CD4-positive, alpha-beta memory T cell (primary cell): ENCODE measurements at regions of chr2 and their contacts with region 1.

Region 1: DNA sequence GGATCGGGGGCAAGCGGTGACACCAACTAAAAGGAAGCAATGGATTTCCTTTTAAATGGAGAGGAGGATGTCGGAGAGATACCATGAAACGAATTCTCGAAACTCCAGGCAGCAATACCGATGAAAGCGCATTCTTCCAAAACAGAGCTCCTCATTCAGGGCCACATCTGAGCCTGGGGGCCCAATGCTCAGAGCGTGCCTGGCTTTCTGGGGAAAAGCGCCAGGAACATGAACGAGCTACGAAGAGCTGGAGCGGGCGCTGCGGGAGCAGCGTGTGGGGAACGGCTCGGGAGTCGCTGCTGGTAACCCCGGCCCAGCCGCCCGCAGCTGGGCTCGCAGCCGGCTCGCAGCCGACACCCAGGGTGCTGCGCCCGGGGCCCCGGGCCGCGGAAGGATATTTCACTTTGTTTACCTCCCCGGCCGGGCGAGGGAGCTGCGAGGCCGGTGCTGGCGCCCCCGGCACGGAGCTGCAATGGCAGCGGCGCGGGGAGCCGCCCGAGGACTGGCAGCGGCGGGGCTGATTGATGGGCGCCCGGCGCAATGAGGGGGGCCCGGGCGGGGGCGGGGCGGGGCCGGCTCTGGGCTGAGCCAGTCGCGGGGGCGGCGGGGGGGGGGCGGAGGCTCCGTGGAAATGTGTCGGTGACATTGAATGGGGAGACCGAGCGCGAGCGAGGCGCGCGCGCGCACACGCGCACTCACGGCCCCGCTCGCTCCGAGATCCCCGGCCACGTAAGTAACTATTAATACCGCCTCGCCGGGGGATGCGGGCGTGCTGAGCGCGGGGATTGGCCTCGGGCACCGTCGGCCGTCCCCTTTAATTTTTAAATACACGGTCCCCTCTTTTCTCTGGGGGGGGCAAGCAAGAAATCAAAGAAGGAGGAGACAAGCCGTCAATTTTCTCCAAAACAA is at the start of gene TRIB2:
- DNase-seq: peak; percentile 87 to 92 (median 89)
- H3K4me3 ChIP-seq: peak within 1 kb of the TSS; percentile 78 to 96
- H3K4me3 Mint-ChIP-seq: peak within 1 kb of the TSS; percentile 98 to 100 (median 99)
- H3K27ac ChIP-seq: peak within 1 kb of the TSS; percentile 84
- H3K27ac Mint-ChIP-seq: peak within 1 kb of the TSS; percentile 93 to 99 (median 96)
- H3K4me1 ChIP-seq: peaks cover 39% of the 10 kb centered on the region
- H3K4me1 Mint-ChIP-seq: peaks cover 28 to 83% (median 43%) of the 10 kb centered on the region in 4 donors
- H3K27me3 ChIP-seq: no peaks in the 10 kb centered on the region
- H3K27me3 Mint-ChIP-seq: peaks cover 0 to 2% of the 10 kb centered on the region in 2 donors
- total RNA-seq, gene TRIB2: 123 to 126 TPM

Region 2: DNA sequence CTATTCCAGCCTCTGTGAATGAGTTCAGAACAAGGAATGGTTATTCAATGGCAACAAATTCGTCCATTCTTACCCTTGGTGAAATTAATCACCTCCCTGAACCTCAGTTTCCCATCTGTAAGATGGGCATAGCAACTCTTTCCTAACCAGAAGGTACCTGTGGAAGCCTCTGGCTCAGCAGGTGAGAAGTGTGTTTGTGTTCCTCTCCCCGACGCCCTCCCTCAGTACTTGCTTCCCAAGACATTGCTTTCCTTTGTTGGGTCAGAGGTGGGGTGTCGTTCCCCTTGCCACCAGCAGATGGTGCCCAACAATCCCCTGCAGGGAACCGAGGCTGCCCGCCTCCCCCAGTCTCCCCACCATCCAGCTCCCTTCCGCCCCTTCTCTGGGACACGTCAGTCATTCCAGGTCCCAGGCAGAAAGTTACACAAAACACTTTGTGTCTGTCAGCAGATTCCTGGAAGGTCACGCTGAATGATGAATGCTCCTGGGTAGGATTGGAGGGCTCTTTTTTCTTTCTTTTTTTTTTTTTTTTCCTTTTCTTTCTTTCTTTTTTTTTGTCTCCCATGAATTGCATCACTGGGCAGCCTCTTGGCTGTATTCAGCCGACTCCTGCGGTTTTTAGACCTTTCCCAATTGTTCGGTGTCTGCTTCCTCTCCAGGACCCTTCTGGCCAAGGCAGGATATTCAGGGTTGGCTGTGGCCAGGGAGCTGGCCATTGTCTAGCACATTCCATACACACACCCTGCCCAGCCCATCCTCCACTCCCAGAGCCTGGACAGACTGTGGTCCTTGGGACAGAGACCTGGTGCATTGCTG is 852.8 kb before region 1 on chr2:
- CTCF ChIA-PET with region 1: interaction called, 24 read pairs
- POLR2A ChIA-PET with region 1: interaction called, 11 read pairs
- intact Hi-C with region 1: loop called (anchors 1 kb)
- DNase-seq: peak; percentile 59 to 67 (median 63)
- H3K4me3 ChIP-seq: peak overlapping the region in 1 of 2 donors; percentile 18
- H3K4me3 Mint-ChIP-seq: peak overlapping the region; percentile 54 to 87 (median 72)
- H3K27ac ChIP-seq: peak overlapping the region; percentile 3
- H3K27ac Mint-ChIP-seq: peak overlapping the region in 3 of 7 donors; percentile 26 to 50 (median 31)
- H3K4me1 ChIP-seq: peaks cover 25% of the 10 kb centered on the region
- H3K4me1 Mint-ChIP-seq: peaks cover 19 to 38% (median 23%) of the 10 kb centered on the region in 4 donors
- H3K27me3 ChIP-seq: no peaks in the 10 kb centered on the region
- H3K27me3 Mint-ChIP-seq: no peaks in the 10 kb centered on the region

Region 3: DNA sequence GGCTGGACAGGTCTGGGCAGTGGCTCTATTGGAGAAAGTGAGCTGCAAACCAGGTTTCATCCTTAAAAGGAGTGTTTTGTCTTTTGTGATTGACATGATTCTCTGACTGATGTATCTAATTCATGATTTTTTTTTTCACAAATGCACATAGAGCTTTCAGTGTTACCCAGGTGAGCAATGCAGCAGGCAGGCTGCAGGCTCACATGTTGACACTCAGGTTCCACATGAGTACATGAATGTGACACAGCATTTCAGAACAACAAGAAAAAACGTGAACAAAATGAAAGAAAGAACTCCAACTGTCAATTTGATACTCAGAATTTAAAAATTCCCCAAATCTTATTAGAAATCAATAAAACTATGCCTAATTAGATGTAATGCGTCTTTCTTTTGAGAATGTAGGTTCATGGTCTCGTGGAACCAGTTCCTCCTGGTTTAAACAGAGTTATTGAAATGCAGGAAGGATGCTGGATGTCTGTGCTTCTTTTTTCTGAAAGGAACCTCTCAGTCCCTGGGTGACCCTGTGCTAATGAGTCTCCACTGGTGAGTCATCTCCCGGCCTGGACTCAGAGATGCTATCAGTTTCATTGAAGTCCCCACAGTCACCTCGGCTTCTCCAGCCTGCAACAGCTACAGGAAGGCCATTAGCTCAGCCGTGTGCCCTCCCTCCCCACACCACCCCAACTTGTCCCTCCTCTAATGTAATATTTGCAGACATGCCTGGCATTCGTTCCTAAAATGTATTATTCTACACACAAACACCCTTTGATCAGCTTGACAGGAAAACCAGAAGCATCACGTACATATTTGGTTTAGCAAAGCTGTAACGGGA is 539.7 kb before region 1 on chr2:
- CTCF ChIA-PET with region 1: no interaction called
- POLR2A ChIA-PET with region 1: interaction called, 8 read pairs
- intact Hi-C with region 1: loop called (anchors 5 kb)
- DNase-seq: peak in 2 of 5 donors; percentile 7 to 21
- H3K4me3 ChIP-seq: peak overlapping the region in 1 of 2 donors; percentile 7
- H3K4me3 Mint-ChIP-seq: peak overlapping the region; percentile 16 to 79 (median 60)
- H3K27ac ChIP-seq: no peak overlapping the region
- H3K27ac Mint-ChIP-seq: peak overlapping the region in 6 of 7 donors; percentile 3 to 93 (median 76)
- H3K4me1 ChIP-seq: peaks cover 32% of the 10 kb centered on the region
- H3K4me1 Mint-ChIP-seq: peaks cover 24 to 47% (median 33%) of the 10 kb centered on the region in 4 donors
- H3K27me3 ChIP-seq: no peaks in the 10 kb centered on the region
- H3K27me3 Mint-ChIP-seq: no peaks in the 10 kb centered on the region

Region 4: DNA sequence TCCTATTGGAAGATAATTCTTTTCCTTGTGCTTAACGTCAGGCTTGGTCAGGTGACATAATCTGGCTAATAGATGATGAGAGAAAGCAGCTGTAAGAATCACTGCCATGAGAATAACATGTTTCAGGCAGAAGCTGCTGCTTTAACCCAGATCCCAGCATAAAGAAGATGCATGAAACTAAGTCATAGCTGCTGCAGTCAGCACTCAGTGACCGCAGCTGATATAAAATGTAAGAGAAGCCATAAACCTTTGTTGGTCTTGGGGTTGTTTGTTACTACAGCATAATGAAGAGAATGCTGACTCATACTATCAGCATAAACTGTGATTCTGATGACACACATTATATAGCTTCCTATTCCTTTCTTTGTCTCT is 274.1 kb before region 1 on chr2:
- CTCF ChIA-PET with region 1: interaction called, 64 read pairs
- POLR2A ChIA-PET with region 1: interaction called, 16 read pairs
- intact Hi-C with region 1: no loop called
- DNase-seq: peak in 1 of 5 donors; percentile 12
- H3K4me3 ChIP-seq: no peak overlapping the region
- H3K4me3 Mint-ChIP-seq: peak overlapping the region in 4 of 8 donors; percentile 7 to 56 (median 32)
- H3K27ac ChIP-seq: no peak overlapping the region
- H3K27ac Mint-ChIP-seq: peak overlapping the region in 3 of 7 donors; percentile 71 to 77 (median 74)
- H3K4me1 ChIP-seq: peaks cover 27% of the 10 kb centered on the region
- H3K4me1 Mint-ChIP-seq: peaks cover 19 to 37% (median 24%) of the 10 kb centered on the region in 4 donors
- H3K27me3 ChIP-seq: no peaks in the 10 kb centered on the region
- H3K27me3 Mint-ChIP-seq: no peaks in the 10 kb centered on the region

Region 5: GRCh38 chr2:12514631-12515433 is 201.7 kb before region 1 on chr2:
- CTCF ChIA-PET with region 1: interaction called, 22 read pairs
- POLR2A ChIA-PET with region 1: interaction called, 33 read pairs
- intact Hi-C with region 1: no loop called
- DNase-seq: peak; percentile 58 to 68 (median 60)
- H3K4me3 ChIP-seq: peak overlapping the region in 1 of 2 donors; percentile 34
- H3K4me3 Mint-ChIP-seq: peak overlapping the region; percentile 2 to 75 (median 69)
- H3K27ac ChIP-seq: peak overlapping the region; percentile 37
- H3K27ac Mint-ChIP-seq: peak overlapping the region; percentile 60 to 90 (median 81)
- H3K4me1 ChIP-seq: peaks cover 65% of the 10 kb centered on the region
- H3K4me1 Mint-ChIP-seq: peaks cover 58 to 79% (median 68%) of the 10 kb centered on the region in 4 donors
- H3K27me3 ChIP-seq: no peaks in the 10 kb centered on the region
- H3K27me3 Mint-ChIP-seq: no peaks in the 10 kb centered on the region

Region 6: GRCh38 chr2:12728221-12728777 is 11.8 kb after region 1 on chr2:
- CTCF ChIA-PET with region 1: interaction called, 56 read pairs
- POLR2A ChIA-PET with region 1: interaction called, 105 read pairs
- intact Hi-C with region 1: loop called (anchors 1 kb)
- DNase-seq: peak; percentile 76 to 86 (median 83)
- H3K4me3 ChIP-seq: peak overlapping the region; percentile 29 to 34
- H3K4me3 Mint-ChIP-seq: peak overlapping the region; percentile 65 to 86 (median 78)
- H3K27ac ChIP-seq: peak overlapping the region; percentile 47
- H3K27ac Mint-ChIP-seq: peak overlapping the region; percentile 87 to 96 (median 91)
- H3K4me1 ChIP-seq: peaks cover 100% of the 10 kb centered on the region
- H3K4me1 Mint-ChIP-seq: peaks cover 70 to 99% (median 92%) of the 10 kb centered on the region in 4 donors
- H3K27me3 ChIP-seq: no peaks in the 10 kb centered on the region
- H3K27me3 Mint-ChIP-seq: no peaks in the 10 kb centered on the region

Region 7: DNA sequence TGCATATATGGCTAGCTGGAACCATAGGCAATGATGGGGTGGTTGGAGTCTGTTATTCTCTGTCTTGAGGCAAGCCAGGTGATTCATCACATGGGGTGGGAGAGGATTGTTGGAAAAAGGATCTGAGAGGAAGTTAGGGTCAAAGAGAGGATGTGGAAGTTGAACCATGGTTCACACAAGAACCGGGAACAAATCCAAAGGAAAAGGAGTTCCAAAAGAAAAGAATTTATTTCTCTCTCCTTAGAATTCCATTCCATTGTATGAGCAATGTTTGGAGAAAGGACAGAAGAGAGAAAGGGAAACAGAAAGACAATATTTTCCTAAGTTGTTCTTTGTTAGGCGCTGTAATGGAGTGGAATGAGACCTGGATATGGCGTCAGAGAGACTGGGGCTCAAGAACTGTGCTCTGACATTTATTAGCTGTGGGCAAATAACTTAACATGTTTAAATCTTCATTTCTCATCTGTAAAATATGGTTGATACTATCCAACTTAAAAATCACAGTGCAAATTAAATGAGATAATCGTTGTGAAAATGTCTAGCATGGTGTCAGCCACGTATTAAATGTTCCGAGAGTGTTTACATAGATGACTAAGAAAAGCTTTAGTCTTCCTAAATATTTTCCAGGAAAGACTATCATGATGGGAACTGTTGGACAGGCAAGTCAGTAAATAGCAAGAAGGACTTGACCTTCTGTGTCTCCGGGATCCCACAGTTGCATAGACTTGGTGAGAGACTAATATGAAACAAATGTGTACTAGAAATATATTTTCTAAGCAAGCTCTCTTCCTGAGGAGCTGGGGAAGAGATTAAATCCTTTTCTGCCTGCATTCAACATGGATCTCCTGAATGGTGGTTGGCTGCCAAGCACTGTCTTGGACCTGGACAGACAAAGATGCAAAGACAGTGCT is 71.6 kb after region 1 on chr2:
- CTCF ChIA-PET with region 1: no interaction called
- POLR2A ChIA-PET with region 1: no interaction called
- intact Hi-C with region 1: no loop called
- DNase-seq: no peak
- H3K4me3 ChIP-seq: no peak overlapping the region
- H3K4me3 Mint-ChIP-seq: no peak overlapping the region
- H3K27ac ChIP-seq: no peak overlapping the region
- H3K27ac Mint-ChIP-seq: no peak overlapping the region
- H3K4me1 ChIP-seq: no peaks in the 10 kb centered on the region
- H3K4me1 Mint-ChIP-seq: no peaks in the 10 kb centered on the region
- H3K27me3 ChIP-seq: no peaks in the 10 kb centered on the region
- H3K27me3 Mint-ChIP-seq: peaks cover 1 to 5% of the 10 kb centered on the region in 2 donors